ENCODE measurements at regions of chr18 and their contacts with region 1.

Region 1: GRCh38 chr18:54983041-54983686 is 23.9 kb upstream of the CCDC68 start:
- DNase-seq: no peak
- ATAC-seq: peak; percentile 43

Region 2: DNA sequence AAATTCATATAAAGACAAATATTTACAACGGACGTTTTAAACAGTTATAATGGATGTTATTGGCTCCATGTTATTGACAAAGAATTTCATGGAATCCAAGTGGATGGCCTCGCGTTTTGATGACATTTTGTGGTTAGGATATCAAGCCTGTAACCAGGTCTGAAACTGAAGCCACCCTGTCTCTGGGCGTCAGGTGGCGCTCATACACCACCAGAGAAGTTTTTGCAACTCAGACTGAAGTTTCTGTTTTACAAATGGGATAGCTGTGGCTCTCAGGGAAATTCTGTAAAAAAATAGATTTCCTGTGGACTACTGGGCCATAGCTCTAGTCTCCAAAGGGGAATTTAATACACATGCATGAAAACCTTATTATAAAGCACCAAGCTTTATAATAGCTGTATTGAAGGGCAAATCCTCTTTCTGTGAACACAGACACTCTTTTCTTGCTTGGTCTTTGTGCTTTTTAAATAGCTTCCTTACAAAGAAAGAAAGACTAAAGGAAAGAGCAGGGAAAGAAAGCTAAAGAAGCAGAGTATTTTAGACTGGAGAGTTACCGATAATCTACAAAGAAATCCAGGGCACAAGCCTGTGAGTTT is 538.7 kb before region 1 on chr18:
- intact Hi-C with region 1: loop called (anchors 5 kb)
- DNase-seq: peak; percentile 38
- ATAC-seq: peak; percentile 69

Region 3: GRCh38 chr18:54558609-54559585 is 424.3 kb before region 1 on chr18:
- intact Hi-C with region 1: loop called (anchors 10 kb)
- DNase-seq: no peak
- ATAC-seq: no peak

Region 4: GRCh38 chr18:54679318-54680149 is 303.6 kb before region 1 on chr18:
- intact Hi-C with region 1: loop called (anchors 5 kb)
- DNase-seq: no peak
- ATAC-seq: peak; percentile 67